ENCODE measurements at regions of chr19 and their contacts with region 1.

Region 1: GRCh38 chr19:47190167-47190727 is 40.8 kb downstream of the BBC3 start:
- DNase-seq: no peak
- ATAC-seq: no peak
- H3K4me3 ChIP-seq: no peak overlapping the region
- H3K27ac ChIP-seq: no peak overlapping the region
- H3K4me1 ChIP-seq: peaks cover 19% of the 10 kb centered on the region
- H3K27me3 ChIP-seq: no peaks in the 10 kb centered on the region
- CTCF ChIP-seq: no peak
- EP300 ChIP-seq: no peak
- POLR2A ChIP-seq: no peak
- RAD21 ChIP-seq: no peak

Region 2: GRCh38 chr19:46967578-46968027 is 222.6 kb before region 1 on chr19:
- CTCF ChIA-PET with region 1: no interaction called
- POLR2A ChIA-PET with region 1: no interaction called
- RAD21 ChIA-PET with region 1: no interaction called
- SMC1A ChIA-PET with region 1: no interaction called
- in situ Hi-C with region 1: no loop called
- intact Hi-C with region 1: no loop called
- DNase-seq: no peak
- ATAC-seq: no peak
- H3K4me3 ChIP-seq: no peak overlapping the region
- H3K27ac ChIP-seq: no peak overlapping the region
- H3K4me1 ChIP-seq: no peaks in the 10 kb centered on the region
- H3K27me3 ChIP-seq: no peaks in the 10 kb centered on the region
- CTCF ChIP-seq: no peak
- EP300 ChIP-seq: no peak
- POLR2A ChIP-seq: no peak
- RAD21 ChIP-seq: no peak

Region 3: GRCh38 chr19:47130591-47131227 is 59.5 kb before region 1 on chr19 and contains the start of gene SAE1:
- CTCF ChIA-PET with region 1: interaction called, 17 read pairs
- POLR2A ChIA-PET with region 1: interaction called, 3 read pairs
- RAD21 ChIA-PET with region 1: interaction called, 11 read pairs
- SMC1A ChIA-PET with region 1: interaction called, 5 read pairs
- in situ Hi-C with region 1: no loop called
- intact Hi-C with region 1: no loop called
- DNase-seq: peak; percentile 95
- ATAC-seq: peak; percentile 92
- H3K4me3 ChIP-seq: peak within 1 kb of the TSS; percentile 94
- H3K27ac ChIP-seq: peak within 1 kb of the TSS; percentile 90
- H3K4me1 ChIP-seq: peaks cover 3% of the 10 kb centered on the region; the same call in 1 of the 2 replicates
- H3K27me3 ChIP-seq: no peaks in the 10 kb centered on the region
- CTCF ChIP-seq: peak; percentile 53 to 81 (median 56); a peak in 5 of 6 replicates
- EP300 ChIP-seq: no peak
- POLR2A ChIP-seq: peak; percentile 94
- RAD21 ChIP-seq: no peak; the same call in 1 of the 2 replicates
- polyA plus RNA-seq, gene SAE1: 62.0 to 90.0 TPM

Region 4: GRCh38 chr19:47152224-47153017 is 37.8 kb before region 1 on chr19:
- CTCF ChIA-PET with region 1: interaction called, 17 read pairs
- POLR2A ChIA-PET with region 1: interaction called, 4 read pairs
- RAD21 ChIA-PET with region 1: interaction called, 15 read pairs
- SMC1A ChIA-PET with region 1: interaction called, 20 read pairs
- in situ Hi-C with region 1: no loop called
- intact Hi-C with region 1: loop called (anchors 5 kb)
- DNase-seq: no peak
- ATAC-seq: no peak
- H3K4me3 ChIP-seq: no peak overlapping the region
- H3K27ac ChIP-seq: no peak overlapping the region
- H3K4me1 ChIP-seq: peaks cover 14% of the 10 kb centered on the region
- H3K27me3 ChIP-seq: no peaks in the 10 kb centered on the region
- CTCF ChIP-seq: no peak
- EP300 ChIP-seq: no peak
- POLR2A ChIP-seq: no peak
- RAD21 ChIP-seq: no peak

Region 5: DNA sequence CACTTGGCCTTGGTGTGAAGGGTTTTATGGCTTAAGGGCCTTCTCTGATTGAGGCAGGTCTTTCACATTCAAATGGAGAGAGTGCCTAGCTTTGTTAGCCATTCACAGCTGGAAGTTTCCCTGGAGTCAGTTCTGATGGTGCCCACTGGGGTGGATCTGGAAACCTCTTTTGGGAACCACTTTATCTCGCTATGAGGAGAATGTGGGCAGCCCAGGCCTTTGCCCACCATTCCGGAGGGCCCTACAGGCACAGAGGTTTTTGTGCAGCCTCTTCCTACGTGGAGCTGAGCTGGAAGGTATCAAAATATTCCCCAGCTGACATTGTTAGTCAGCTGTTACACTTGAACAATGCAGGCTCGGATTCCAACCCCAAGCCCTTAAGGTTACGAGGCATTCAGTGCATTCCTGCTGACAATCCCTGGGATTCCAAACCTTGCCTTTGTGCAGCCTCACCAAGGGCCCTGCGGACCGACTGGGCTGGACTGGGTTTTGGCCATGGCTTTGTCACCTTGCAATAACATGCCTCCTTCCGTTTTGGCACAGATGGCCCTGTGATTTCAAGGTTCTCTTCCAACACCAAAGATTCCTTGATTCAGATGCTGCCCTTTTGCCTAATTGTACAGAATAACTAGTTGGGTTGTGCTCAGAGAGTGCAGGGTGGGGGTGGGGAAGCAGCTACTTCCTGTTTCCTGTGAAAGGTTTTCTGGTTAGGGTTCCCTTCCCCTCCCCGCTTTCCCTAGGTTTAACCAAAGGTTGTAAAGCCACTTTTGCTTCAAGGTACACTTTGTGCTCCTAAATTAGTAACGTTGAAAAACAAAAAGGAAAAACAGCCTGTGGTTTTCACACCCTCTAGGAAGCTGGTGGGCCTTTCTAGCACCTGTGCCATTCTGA is 32.6 kb before region 1 on chr19:
- CTCF ChIA-PET with region 1: interaction called, 17 read pairs
- POLR2A ChIA-PET with region 1: interaction called, 4 read pairs
- RAD21 ChIA-PET with region 1: interaction called, 15 read pairs
- SMC1A ChIA-PET with region 1: interaction called, 20 read pairs
- in situ Hi-C with region 1: no loop called
- intact Hi-C with region 1: loop called (anchors 5 kb)
- DNase-seq: no peak
- ATAC-seq: peak; percentile 62
- H3K4me3 ChIP-seq: no peak overlapping the region
- H3K27ac ChIP-seq: peak overlapping the region; percentile 8
- H3K4me1 ChIP-seq: peaks cover 24% of the 10 kb centered on the region
- H3K27me3 ChIP-seq: no peaks in the 10 kb centered on the region
- CTCF ChIP-seq: no peak
- EP300 ChIP-seq: no peak
- POLR2A ChIP-seq: no peak
- RAD21 ChIP-seq: no peak

Region 6: GRCh38 chr19:47176627-47177090 is 13.6 kb before region 1 on chr19:
- CTCF ChIA-PET with region 1: interaction called, 11 read pairs
- POLR2A ChIA-PET with region 1: interaction called, 10 read pairs
- RAD21 ChIA-PET with region 1: no interaction called
- SMC1A ChIA-PET with region 1: interaction called, 9 read pairs
- in situ Hi-C with region 1: no loop called
- intact Hi-C with region 1: no loop called
- DNase-seq: no peak
- ATAC-seq: no peak
- H3K4me3 ChIP-seq: no peak overlapping the region
- H3K27ac ChIP-seq: 0 out of 2 replicates have a peak overlapping the region, but pooled peaks have one; percentile 8
- H3K4me1 ChIP-seq: peaks cover 8% of the 10 kb centered on the region
- H3K27me3 ChIP-seq: no peaks in the 10 kb centered on the region
- CTCF ChIP-seq: no peak
- EP300 ChIP-seq: no peak
- POLR2A ChIP-seq: no peak
- RAD21 ChIP-seq: no peak

Region 7: GRCh38 chr19:47203254-47203653 is 13.0 kb after region 1 on chr19:
- CTCF ChIA-PET with region 1: interaction called, 7 read pairs
- POLR2A ChIA-PET with region 1: interaction called, 11 read pairs
- RAD21 ChIA-PET with region 1: interaction called, 8 read pairs
- SMC1A ChIA-PET with region 1: interaction called, 3 read pairs
- in situ Hi-C with region 1: no loop called
- intact Hi-C with region 1: no loop called
- DNase-seq: no peak
- ATAC-seq: no peak
- H3K4me3 ChIP-seq: no peak overlapping the region
- H3K27ac ChIP-seq: no peak overlapping the region
- H3K4me1 ChIP-seq: no peaks in the 10 kb centered on the region
- H3K27me3 ChIP-seq: no peaks in the 10 kb centered on the region
- CTCF ChIP-seq: no peak
- EP300 ChIP-seq: no peak
- POLR2A ChIP-seq: no peak
- RAD21 ChIP-seq: no peak

Region 8: GRCh38 chr19:47284324-47284899 is 94.2 kb after region 1 on chr19:
- CTCF ChIA-PET with region 1: no interaction called
- POLR2A ChIA-PET with region 1: no interaction called
- RAD21 ChIA-PET with region 1: no interaction called
- SMC1A ChIA-PET with region 1: no interaction called
- in situ Hi-C with region 1: no loop called
- intact Hi-C with region 1: no loop called
- DNase-seq: no peak
- ATAC-seq: peak; percentile 46
- H3K4me3 ChIP-seq: no peak overlapping the region
- H3K27ac ChIP-seq: no peak overlapping the region
- H3K4me1 ChIP-seq: peaks cover 15% of the 10 kb centered on the region
- H3K27me3 ChIP-seq: no peaks in the 10 kb centered on the region
- CTCF ChIP-seq: peak; percentile 73 to 85 (median 79)
- EP300 ChIP-seq: no peak
- POLR2A ChIP-seq: no peak
- RAD21 ChIP-seq: peak; percentile 58

Measured in GM12878 (cell line).